Ascending aorta (tissue), 2 donors: ENCODE measurements at regions of chr11 and their contacts with region 1.

Region 1: DNA sequence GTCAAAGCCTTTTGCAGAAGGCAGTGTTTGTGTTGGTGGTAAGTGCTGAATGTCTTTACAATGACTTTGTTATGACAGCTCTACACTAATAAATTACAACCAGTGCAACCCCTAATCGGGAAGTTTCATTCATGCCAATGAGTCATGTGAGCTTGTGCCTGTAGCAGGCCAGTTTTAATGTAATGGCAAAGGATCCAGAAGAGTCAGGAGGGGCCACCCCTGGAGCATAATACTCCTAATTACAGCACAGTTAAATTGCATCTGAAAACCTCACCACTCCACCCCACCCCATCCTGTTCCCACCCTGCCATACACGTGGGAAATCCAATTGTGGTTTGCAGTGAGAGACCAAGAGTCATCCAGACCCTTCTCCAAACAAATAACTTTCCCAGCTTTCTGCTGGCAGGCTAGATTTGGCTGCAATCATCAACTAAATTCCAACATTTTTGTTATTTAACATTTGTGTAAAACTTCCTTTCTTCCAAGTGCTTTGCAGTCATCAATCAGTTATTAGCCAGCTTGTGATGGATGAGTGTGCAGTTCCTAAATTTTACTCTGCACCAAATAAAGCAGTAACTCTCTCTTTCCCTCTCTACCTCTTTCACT is 277.3 kb upstream of the FAT3 start:
- DNase-seq: peak in 1 of 2 donors; percentile 70
- H3K4me3 ChIP-seq: peak overlapping the region in 1 of 2 donors; percentile 4
- H3K27ac ChIP-seq: peak overlapping the region; percentile 11 to 52
- H3K4me1 ChIP-seq: peaks cover 2 to 18% of the 10 kb centered on the region in 2 donors
- H3K27me3 ChIP-seq: no peaks in the 10 kb centered on the region
- CTCF ChIP-seq: no peak

Region 2: DNA sequence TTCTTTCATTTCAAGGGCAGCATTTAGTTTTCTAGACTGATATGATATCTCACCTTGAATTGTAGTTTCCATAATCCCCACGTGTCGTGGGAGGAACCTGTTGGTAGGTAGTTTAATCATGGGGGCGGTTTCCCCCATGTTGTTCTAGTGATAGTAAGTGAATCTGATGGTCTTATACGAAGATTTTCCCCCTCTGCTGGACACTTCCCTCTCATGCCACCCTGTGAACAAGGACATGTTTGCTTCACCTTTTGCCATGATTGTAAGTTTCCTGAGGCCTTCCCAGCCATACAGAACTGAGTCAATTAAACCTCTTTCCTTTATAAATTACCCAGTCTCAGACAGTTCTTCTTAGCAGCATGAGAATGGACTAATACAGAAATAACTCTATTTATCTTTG is 573.8 kb before region 1 on chr11:
- intact Hi-C with region 1: no loop called
- DNase-seq: no peak
- H3K4me3 ChIP-seq: no peak overlapping the region
- H3K27ac ChIP-seq: no peak overlapping the region
- H3K4me1 ChIP-seq: no peaks in the 10 kb centered on the region
- H3K27me3 ChIP-seq: no peaks in the 10 kb centered on the region
- CTCF ChIP-seq: no peak

Region 3: DNA sequence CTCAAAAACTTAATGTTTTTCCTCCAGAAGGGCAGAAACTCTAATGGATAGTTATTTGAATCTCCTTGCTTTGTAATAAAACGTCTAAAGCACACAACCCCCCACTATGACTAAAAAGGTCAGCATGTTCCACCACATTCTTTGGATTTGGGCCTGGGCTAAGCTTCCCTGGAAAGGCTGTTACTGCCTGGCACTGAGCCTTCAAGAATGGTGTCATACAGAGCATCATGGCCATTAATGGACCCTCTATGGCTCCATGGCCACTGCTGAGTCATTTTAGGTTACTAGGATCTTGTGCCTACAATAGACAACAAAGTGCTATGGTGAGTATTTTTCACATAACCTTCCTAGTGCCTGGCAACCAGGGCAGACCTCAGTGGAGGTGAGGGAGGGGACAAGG is 34.7 kb after region 1 on chr11:
- intact Hi-C with region 1: loop called (anchors 1 kb)
- DNase-seq: peak; percentile 61 to 94
- H3K4me3 ChIP-seq: no peak overlapping the region
- H3K27ac ChIP-seq: peak overlapping the region; percentile 68 to 85
- H3K4me1 ChIP-seq: peaks cover 0 to 5% of the 10 kb centered on the region in 2 donors
- H3K27me3 ChIP-seq: no peaks in the 10 kb centered on the region
- CTCF ChIP-seq: no peak

Region 4: DNA sequence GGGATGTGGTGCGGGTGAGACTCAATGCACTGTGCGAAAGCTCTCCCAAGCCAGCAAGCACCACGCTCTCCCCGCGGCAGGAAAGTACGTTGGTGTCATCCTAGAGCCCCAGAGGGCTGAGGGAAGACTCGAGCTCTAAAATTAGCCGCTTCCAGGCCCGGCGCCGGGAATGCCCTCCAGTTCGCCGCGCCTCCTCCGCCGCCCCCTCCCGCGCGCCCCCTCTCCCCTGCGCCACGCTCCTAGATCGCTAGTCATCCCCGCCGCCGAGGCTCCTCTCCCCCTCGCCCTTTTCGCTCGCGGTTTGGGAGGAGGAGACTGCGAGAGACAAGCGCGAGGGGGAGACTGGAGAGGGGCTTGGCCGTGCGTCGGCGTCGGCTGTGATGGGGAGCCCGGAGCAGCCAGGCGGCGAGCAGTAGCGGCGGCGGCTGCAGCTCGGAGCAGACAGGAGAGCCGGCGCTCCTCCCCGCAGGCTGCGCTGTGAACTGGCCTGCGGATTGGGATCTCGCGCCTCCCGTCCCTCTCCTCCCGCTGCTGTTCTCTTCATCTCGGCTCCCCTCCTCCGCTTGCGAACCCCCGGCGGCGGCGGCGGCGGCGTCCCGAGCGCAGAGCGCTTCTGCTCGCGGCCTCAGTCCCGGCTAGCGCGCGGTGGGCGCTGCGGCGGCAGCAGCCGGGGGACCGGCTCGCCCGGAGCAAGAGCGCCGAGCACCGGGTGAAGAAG is 277.2 kb after region 1 on chr11 and contains the start of gene FAT3:
- intact Hi-C with region 1: loop called (anchors 10 kb)
- DNase-seq: peak in 1 of 2 donors; percentile 70
- H3K4me3 ChIP-seq: peak within 1 kb of the TSS; percentile 54 to 82
- H3K27ac ChIP-seq: peak within 1 kb of the TSS; percentile 60 to 61
- H3K4me1 ChIP-seq: no peaks in the 10 kb centered on the region
- H3K27me3 ChIP-seq: no peaks in the 10 kb centered on the region
- CTCF ChIP-seq: no peak
- total RNA-seq, gene FAT3: 2.8 TPM